GM12878 (cell line): ENCODE measurements at regions of chr1 and their contacts with region 1.

Region 1: GRCh38 chr1:212062832-212063438 is 27.4 kb downstream of the DTL start:
- DNase-seq: no peak
- ATAC-seq: peak; percentile 83
- H3K4me3 ChIP-seq: no peak overlapping the region
- H3K27ac ChIP-seq: no peak overlapping the region
- H3K4me1 ChIP-seq: no peaks in the 10 kb centered on the region
- H3K27me3 ChIP-seq: no peaks in the 10 kb centered on the region
- CTCF ChIP-seq: peak; percentile 54 to 63 (median 56); a peak in 5 of 6 replicates
- EP300 ChIP-seq: no peak
- POLR2A ChIP-seq: no peak
- RAD21 ChIP-seq: peak; percentile 59

Region 2: GRCh38 chr1:212002536-212002935 is 60.4 kb before region 1 on chr1:
- CTCF ChIA-PET with region 1: no interaction called
- POLR2A ChIA-PET with region 1: no interaction called
- RAD21 ChIA-PET with region 1: no interaction called
- SMC1A ChIA-PET with region 1: no interaction called
- in situ Hi-C with region 1: no loop called
- intact Hi-C with region 1: no loop called
- DNase-seq: no peak
- ATAC-seq: no peak
- H3K4me3 ChIP-seq: no peak overlapping the region
- H3K27ac ChIP-seq: no peak overlapping the region
- H3K4me1 ChIP-seq: no peaks in the 10 kb centered on the region
- H3K27me3 ChIP-seq: no peaks in the 10 kb centered on the region
- CTCF ChIP-seq: no peak
- EP300 ChIP-seq: no peak
- POLR2A ChIP-seq: no peak
- RAD21 ChIP-seq: no peak

Region 3: GRCh38 chr1:212045981-212046380 is 17.0 kb before region 1 on chr1:
- CTCF ChIA-PET with region 1: interaction called, 27 read pairs
- POLR2A ChIA-PET with region 1: interaction called, 4 read pairs
- RAD21 ChIA-PET with region 1: no interaction called
- SMC1A ChIA-PET with region 1: interaction called, 4 read pairs
- in situ Hi-C with region 1: no loop called
- intact Hi-C with region 1: no loop called
- DNase-seq: no peak
- ATAC-seq: no peak
- H3K4me3 ChIP-seq: no peak overlapping the region
- H3K27ac ChIP-seq: no peak overlapping the region
- H3K4me1 ChIP-seq: no peaks in the 10 kb centered on the region
- H3K27me3 ChIP-seq: no peaks in the 10 kb centered on the region
- CTCF ChIP-seq: no peak
- EP300 ChIP-seq: no peak
- POLR2A ChIP-seq: no peak
- RAD21 ChIP-seq: no peak

Region 4: GRCh38 chr1:212077051-212077450 is 14.1 kb after region 1 on chr1:
- CTCF ChIA-PET with region 1: interaction called, 43 read pairs
- POLR2A ChIA-PET with region 1: interaction called, 5 read pairs
- RAD21 ChIA-PET with region 1: interaction called, 7 read pairs
- SMC1A ChIA-PET with region 1: interaction called, 22 read pairs
- in situ Hi-C with region 1: no loop called
- intact Hi-C with region 1: no loop called
- DNase-seq: no peak
- ATAC-seq: no peak
- H3K4me3 ChIP-seq: no peak overlapping the region
- H3K27ac ChIP-seq: no peak overlapping the region
- H3K4me1 ChIP-seq: no peaks in the 10 kb centered on the region
- H3K27me3 ChIP-seq: no peaks in the 10 kb centered on the region
- CTCF ChIP-seq: no peak
- EP300 ChIP-seq: no peak
- POLR2A ChIP-seq: no peak
- RAD21 ChIP-seq: no peak

Region 5: GRCh38 chr1:212368073-212368484 is 305.1 kb after region 1 on chr1:
- CTCF ChIA-PET with region 1: interaction called, 23 read pairs
- POLR2A ChIA-PET with region 1: interaction called, 3 read pairs
- RAD21 ChIA-PET with region 1: interaction called, 3 read pairs
- SMC1A ChIA-PET with region 1: interaction called, 11 read pairs
- in situ Hi-C with region 1: no loop called
- intact Hi-C with region 1: loop called (anchors 2 kb)
- DNase-seq: peak; percentile 36
- ATAC-seq: peak; percentile 99
- H3K4me3 ChIP-seq: no peak overlapping the region
- H3K27ac ChIP-seq: no peak overlapping the region
- H3K4me1 ChIP-seq: no peaks in the 10 kb centered on the region
- H3K27me3 ChIP-seq: no peaks in the 10 kb centered on the region
- CTCF ChIP-seq: peak; percentile 77 to 90 (median 87)
- EP300 ChIP-seq: no peak
- POLR2A ChIP-seq: no peak
- RAD21 ChIP-seq: peak; percentile 90